Activated CD8-positive, alpha-beta T cell treated with anti-CD3 and anti-CD28 coated beads for 36 hours (primary cell): ENCODE measurements at regions of chr13 and their contacts with region 1.

Region 1: GRCh38 chr13:95301183-95301967 is at the start of gene ABCC4:
- DNase-seq: peak; percentile 52
- ATAC-seq: peak; percentile 81
- H3K4me3 Mint-ChIP-seq: peak within 1 kb of the TSS; percentile 80
- H3K27ac Mint-ChIP-seq: peak within 1 kb of the TSS; percentile 69
- H3K4me1 Mint-ChIP-seq: peaks cover 35% of the 10 kb centered on the region
- H3K27me3 Mint-ChIP-seq: no peaks in the 10 kb centered on the region
- CTCF ChIP-seq: no peak
- total RNA-seq, gene ABCC4: 9.6 to 11.8 TPM

Region 2: DNA sequence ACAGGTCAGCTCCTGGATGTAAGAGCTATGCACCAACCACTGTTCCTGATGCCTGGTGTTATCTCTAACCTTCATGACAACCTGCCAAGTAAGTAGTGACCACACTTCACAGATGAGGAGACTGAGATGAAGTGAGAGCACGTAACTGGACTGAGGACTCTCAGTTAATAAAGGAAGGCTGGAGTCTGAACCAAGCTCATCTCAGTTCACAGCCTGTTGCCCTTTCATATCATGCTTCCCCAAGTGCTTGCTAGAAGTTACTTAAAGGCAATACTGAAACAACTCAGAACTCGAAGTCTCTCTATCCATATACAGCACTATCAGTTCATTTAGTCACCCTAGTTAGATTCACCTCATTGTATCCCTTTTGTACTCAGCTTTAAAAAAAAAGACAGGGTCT is 119.8 kb before region 1 on chr13:
- CTCF ChIA-PET with region 1: interaction called, 3 read pairs
- POLR2A ChIA-PET with region 1: no interaction called
- intact Hi-C with region 1: loop called (anchors 2 kb)
- DNase-seq: no peak
- ATAC-seq: no peak
- H3K4me3 Mint-ChIP-seq: no peak overlapping the region
- H3K27ac Mint-ChIP-seq: no peak overlapping the region
- H3K4me1 Mint-ChIP-seq: peaks cover 62% of the 10 kb centered on the region
- H3K27me3 Mint-ChIP-seq: no peaks in the 10 kb centered on the region
- CTCF ChIP-seq: no peak